GM12878 (cell line): ENCODE measurements at regions of chr12 and their contacts with region 1.

Region 1: DNA sequence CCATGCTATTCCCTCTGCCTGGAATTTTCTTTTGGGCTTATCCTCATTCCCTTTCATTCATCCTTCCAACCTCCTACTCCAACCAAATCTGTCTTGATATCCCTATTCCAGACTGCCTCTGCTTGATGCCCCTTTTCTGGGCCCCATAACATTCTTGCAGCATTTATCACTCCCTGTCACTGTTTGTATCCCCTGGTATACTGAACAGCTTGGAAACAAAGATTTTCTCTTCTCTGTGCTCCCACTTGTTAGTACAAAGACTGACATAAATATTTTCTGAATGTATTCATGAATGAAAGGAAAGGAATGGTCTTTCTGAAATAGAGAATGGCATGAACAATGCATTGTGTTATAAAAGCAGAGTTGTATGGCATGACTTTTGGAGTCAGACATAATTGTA is 7.5 kb downstream of the IRAK4 start:
- DNase-seq: no peak
- ATAC-seq: no peak
- H3K4me3 ChIP-seq: no peak overlapping the region
- H3K27ac ChIP-seq: no peak overlapping the region
- H3K4me1 ChIP-seq: 0 out of 2 replicates have a peak, but pooled peaks cover 4% of the 10 kb centered on the region
- H3K27me3 ChIP-seq: no peaks in the 10 kb centered on the region
- CTCF ChIP-seq: no peak
- EP300 ChIP-seq: no peak
- POLR2A ChIP-seq: no peak
- RAD21 ChIP-seq: no peak

Region 2: GRCh38 chr12:43669373-43669772 is 96.9 kb before region 1 on chr12:
- CTCF ChIA-PET with region 1: no interaction called
- POLR2A ChIA-PET with region 1: no interaction called
- RAD21 ChIA-PET with region 1: no interaction called
- SMC1A ChIA-PET with region 1: no interaction called
- in situ Hi-C with region 1: no loop called
- intact Hi-C with region 1: no loop called
- DNase-seq: no peak
- ATAC-seq: no peak
- H3K4me3 ChIP-seq: no peak overlapping the region
- H3K27ac ChIP-seq: no peak overlapping the region
- H3K4me1 ChIP-seq: no peaks in the 10 kb centered on the region
- H3K27me3 ChIP-seq: no peaks in the 10 kb centered on the region
- CTCF ChIP-seq: no peak
- EP300 ChIP-seq: no peak
- POLR2A ChIP-seq: no peak
- RAD21 ChIP-seq: no peak

Region 3: GRCh38 chr12:43742106-43742505 is 24.2 kb before region 1 on chr12:
- CTCF ChIA-PET with region 1: no interaction called
- POLR2A ChIA-PET with region 1: no interaction called
- RAD21 ChIA-PET with region 1: no interaction called
- SMC1A ChIA-PET with region 1: no interaction called
- in situ Hi-C with region 1: no loop called
- intact Hi-C with region 1: no loop called
- DNase-seq: no peak
- ATAC-seq: no peak
- H3K4me3 ChIP-seq: no peak overlapping the region
- H3K27ac ChIP-seq: no peak overlapping the region
- H3K4me1 ChIP-seq: peaks cover 6% of the 10 kb centered on the region
- H3K27me3 ChIP-seq: no peaks in the 10 kb centered on the region
- CTCF ChIP-seq: no peak
- EP300 ChIP-seq: no peak
- POLR2A ChIP-seq: no peak
- RAD21 ChIP-seq: no peak

Region 4: DNA sequence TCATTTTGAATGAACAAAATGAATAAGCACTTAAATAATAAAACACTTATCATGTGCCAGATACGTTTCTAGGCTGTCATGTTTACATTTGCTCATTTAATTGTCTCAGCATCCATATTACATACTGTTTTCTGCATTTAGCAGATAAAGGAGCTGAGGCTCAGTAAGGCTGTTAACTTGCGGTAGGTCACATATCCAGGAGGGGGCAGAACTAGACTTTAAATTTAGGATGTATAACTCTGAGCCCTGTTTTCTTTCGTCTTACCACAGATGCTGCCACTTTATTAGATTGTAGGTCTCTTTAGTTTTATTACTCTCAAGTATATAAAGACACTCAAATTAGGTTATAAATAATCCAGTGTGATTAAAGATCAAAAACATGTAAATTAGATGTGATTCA is 10.2 kb after region 1 on chr12:
- CTCF ChIA-PET with region 1: interaction called, 6 read pairs
- POLR2A ChIA-PET with region 1: interaction called, 6 read pairs
- RAD21 ChIA-PET with region 1: interaction called, 4 read pairs
- SMC1A ChIA-PET with region 1: interaction called, 13 read pairs
- in situ Hi-C with region 1: no loop called
- intact Hi-C with region 1: no loop called
- DNase-seq: no peak
- ATAC-seq: peak; percentile 75
- H3K4me3 ChIP-seq: no peak overlapping the region
- H3K27ac ChIP-seq: no peak overlapping the region
- H3K4me1 ChIP-seq: no peaks in the 10 kb centered on the region
- H3K27me3 ChIP-seq: no peaks in the 10 kb centered on the region
- CTCF ChIP-seq: peak in 2 of 3 experiments; percentile 29 to 35; a peak in 3 of 6 replicates
- EP300 ChIP-seq: no peak
- POLR2A ChIP-seq: no peak
- RAD21 ChIP-seq: peak; percentile 40; the same call in 1 of the 2 replicates